A673 (cell line): ENCODE measurements at regions of chr11 and their contacts with region 1.

Region 1: DNA sequence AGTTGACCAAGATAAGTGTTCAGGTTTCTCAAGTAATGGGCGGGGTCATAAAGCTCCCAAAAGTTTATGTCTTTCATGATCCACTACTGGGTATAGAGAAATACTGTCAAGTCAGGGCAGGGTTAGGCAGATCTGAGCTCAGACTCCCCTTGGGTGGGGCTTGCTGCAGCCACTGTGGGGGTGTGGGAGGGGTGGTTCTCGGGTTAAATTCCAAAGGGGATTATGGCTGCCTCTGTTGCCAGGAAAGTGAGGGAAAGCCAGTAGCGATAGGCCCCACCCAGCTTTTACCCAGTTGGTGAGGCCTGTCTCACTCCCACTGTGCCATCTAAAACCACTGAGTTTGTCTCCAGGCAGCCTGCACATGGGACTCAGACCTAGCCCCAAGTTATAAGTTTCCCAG is 37.8 kb downstream of the DLG2 start:
- DNase-seq: peak; percentile 64
- H3K4me3 ChIP-seq: no peak overlapping the region
- H3K27ac ChIP-seq: no peak overlapping the region
- H3K4me1 ChIP-seq: no peaks in the 10 kb centered on the region
- H3K27me3 ChIP-seq: no peaks in the 10 kb centered on the region
- CTCF ChIP-seq: no peak

Region 2: DNA sequence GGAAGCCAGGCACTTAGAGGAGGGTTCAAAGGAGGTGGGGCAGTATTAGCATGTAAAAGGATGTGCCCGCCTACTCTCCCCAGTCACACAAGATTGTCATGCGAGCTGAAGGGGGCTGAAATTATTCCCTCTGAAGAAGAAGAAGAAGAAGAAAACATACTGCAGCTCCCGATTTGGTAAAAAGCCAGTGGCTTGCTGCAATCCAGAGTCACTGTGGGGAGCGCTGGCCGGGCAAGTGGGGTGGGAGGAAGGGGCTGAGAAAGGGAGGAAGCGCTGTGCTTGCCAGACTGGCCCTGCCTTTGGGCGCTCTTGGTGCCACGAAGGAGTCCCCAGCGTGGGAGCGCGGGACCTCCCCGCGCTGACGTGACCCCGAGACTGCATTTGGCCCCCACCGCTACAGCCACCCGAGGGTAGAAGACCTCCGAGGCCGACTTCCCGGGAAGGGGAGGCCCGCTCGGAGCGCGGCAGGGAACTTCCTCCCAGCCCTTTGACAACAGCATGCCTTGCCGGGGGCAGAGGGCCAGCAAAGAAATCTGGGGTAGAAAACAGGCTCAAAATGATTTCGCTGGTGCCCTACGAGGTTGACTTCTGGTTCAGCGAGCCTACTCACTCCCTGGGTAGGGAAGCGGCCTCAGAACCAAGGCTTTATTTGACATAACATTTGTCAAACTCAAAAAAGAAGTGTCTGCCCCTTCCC is 868.5 kb before region 1 on chr11:
- CTCF ChIA-PET with region 1: no interaction called
- POLR2A ChIA-PET with region 1: no interaction called
- intact Hi-C with region 1: loop called (anchors 5 kb)
- DNase-seq: peak; percentile 54
- H3K4me3 ChIP-seq: peak overlapping the region; percentile 32
- H3K27ac ChIP-seq: no peak overlapping the region
- H3K4me1 ChIP-seq: peaks cover 5% of the 10 kb centered on the region
- H3K27me3 ChIP-seq: peaks cover 32% of the 10 kb centered on the region
- CTCF ChIP-seq: no peak

Region 3: DNA sequence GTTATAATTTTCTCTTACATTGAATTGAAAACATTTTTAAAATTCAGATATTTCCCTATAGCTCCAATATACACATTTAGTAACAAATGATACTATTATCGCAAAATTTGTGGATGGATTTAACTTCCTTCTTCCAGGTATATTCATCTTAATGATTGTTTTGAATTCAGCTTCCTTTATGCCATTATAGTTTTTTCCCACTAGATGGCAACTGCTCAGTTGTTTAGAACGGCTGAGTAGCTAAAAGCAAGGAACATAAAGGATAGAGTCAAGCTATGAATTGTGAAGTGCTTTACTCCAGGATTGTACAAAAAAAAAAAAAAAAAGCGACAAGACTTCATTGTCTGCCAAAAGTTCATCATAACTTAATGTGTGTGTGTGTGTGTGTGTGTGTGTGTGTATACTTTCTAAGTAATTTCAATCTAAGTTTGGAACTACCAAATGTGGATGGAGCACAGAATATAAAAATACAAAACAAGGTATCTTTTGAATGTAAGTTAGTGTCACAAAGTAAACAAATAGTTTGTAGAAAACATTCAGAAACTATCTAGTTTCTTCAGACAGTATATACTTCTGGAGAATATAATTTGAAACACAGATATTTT is 808.6 kb before region 1 on chr11:
- CTCF ChIA-PET with region 1: interaction called, 19 read pairs
- POLR2A ChIA-PET with region 1: no interaction called
- intact Hi-C with region 1: loop called (anchors 5 kb)
- DNase-seq: peak; percentile 34
- H3K4me3 ChIP-seq: no peak overlapping the region
- H3K27ac ChIP-seq: no peak overlapping the region
- H3K4me1 ChIP-seq: no peaks in the 10 kb centered on the region
- H3K27me3 ChIP-seq: no peaks in the 10 kb centered on the region
- CTCF ChIP-seq: peak; percentile 64